Activated CD8-positive, alpha-beta T cell treated with anti-CD3 and anti-CD28 coated beads for 36 hours (primary cell): ENCODE measurements at regions of chr17 and their contacts with region 1.

Region 1: GRCh38 chr17:32936894-32937500 is 9.0 kb downstream of the TMEM98 start:
- DNase-seq: peak; percentile 80
- ATAC-seq: peak; percentile 96
- H3K4me3 Mint-ChIP-seq: no peak overlapping the region
- H3K27ac Mint-ChIP-seq: no peak overlapping the region
- H3K4me1 Mint-ChIP-seq: peaks cover 3% of the 10 kb centered on the region
- H3K27me3 Mint-ChIP-seq: peaks cover 18% of the 10 kb centered on the region
- CTCF ChIP-seq: peak; percentile 96

Region 2: GRCh38 chr17:32909787-32910369 is 27.1 kb before region 1 on chr17:
- CTCF ChIA-PET with region 1: interaction called, 15 read pairs
- POLR2A ChIA-PET with region 1: no interaction called
- intact Hi-C with region 1: no loop called
- DNase-seq: peak; percentile 86
- ATAC-seq: peak; percentile 86
- H3K4me3 Mint-ChIP-seq: no peak overlapping the region
- H3K27ac Mint-ChIP-seq: no peak overlapping the region
- H3K4me1 Mint-ChIP-seq: peaks cover 12% of the 10 kb centered on the region
- H3K27me3 Mint-ChIP-seq: peaks cover 10% of the 10 kb centered on the region
- CTCF ChIP-seq: peak; percentile 71

Region 3: DNA sequence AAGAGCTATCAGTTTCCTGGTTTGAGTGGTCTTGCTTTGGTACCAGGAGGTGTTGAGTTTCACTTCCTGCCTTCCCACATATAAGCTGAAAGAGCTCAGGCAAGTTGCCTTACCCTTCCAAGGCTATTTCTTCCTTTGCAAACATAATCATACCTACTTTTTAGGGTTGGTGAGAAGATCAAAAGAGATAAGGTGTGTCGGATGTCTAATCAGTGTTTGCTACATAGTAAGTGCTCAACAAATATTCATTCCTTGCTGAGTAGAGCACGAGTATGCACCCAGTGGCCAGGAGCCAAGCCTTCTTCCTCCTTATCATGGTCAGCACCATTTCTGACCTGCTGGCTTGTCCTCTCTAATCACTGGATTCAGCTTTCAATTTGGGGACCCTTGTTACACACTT is 21.8 kb before region 1 on chr17:
- CTCF ChIA-PET with region 1: interaction called, 15 read pairs
- POLR2A ChIA-PET with region 1: no interaction called
- intact Hi-C with region 1: no loop called
- DNase-seq: no peak
- ATAC-seq: no peak
- H3K4me3 Mint-ChIP-seq: no peak overlapping the region
- H3K27ac Mint-ChIP-seq: no peak overlapping the region
- H3K4me1 Mint-ChIP-seq: peaks cover 29% of the 10 kb centered on the region
- H3K27me3 Mint-ChIP-seq: peaks cover 3% of the 10 kb centered on the region
- CTCF ChIP-seq: no peak

Region 4: GRCh38 chr17:32921017-32921416 is 16.0 kb before region 1 on chr17:
- CTCF ChIA-PET with region 1: interaction called, 12 read pairs
- POLR2A ChIA-PET with region 1: no interaction called
- intact Hi-C with region 1: no loop called
- DNase-seq: no peak
- ATAC-seq: no peak
- H3K4me3 Mint-ChIP-seq: no peak overlapping the region
- H3K27ac Mint-ChIP-seq: no peak overlapping the region
- H3K4me1 Mint-ChIP-seq: peaks cover 12% of the 10 kb centered on the region
- H3K27me3 Mint-ChIP-seq: peaks cover 7% of the 10 kb centered on the region
- CTCF ChIP-seq: no peak